ENCODE measurements at regions of chr19 and their contacts with region 1.

Region 1: GRCh38 chr19:17830567-17831418 is 9.5 kb upstream of the INSL3 start:
- DNase-seq: peak; percentile 38
- ATAC-seq: peak; percentile 46
- H3K4me3 ChIP-seq: no peak overlapping the region
- H3K4me3 Mint-ChIP-seq: no peak overlapping the region
- H3K27ac ChIP-seq: no peak overlapping the region
- H3K27ac Mint-ChIP-seq: no peak overlapping the region
- H3K4me1 ChIP-seq: no peaks in the 10 kb centered on the region
- H3K4me1 Mint-ChIP-seq: no peaks in the 10 kb centered on the region
- H3K27me3 ChIP-seq: no peaks in the 10 kb centered on the region
- H3K27me3 Mint-ChIP-seq: no peaks in the 10 kb centered on the region
- CTCF ChIP-seq: no peak

Region 2: GRCh38 chr19:17847538-17848366 is 17.0 kb after region 1 on chr19 and contains the start of gene JAK3:
- CTCF ChIA-PET with region 1: no interaction called
- POLR2A ChIA-PET with region 1: interaction called, 11 read pairs
- intact Hi-C with region 1: no loop called
- DNase-seq: peak; percentile 88
- ATAC-seq: peak; percentile 81
- H3K4me3 ChIP-seq: peak within 1 kb of the TSS; percentile 57 to 85 (median 67)
- H3K4me3 Mint-ChIP-seq: peak within 1 kb of the TSS; percentile 96
- H3K27ac ChIP-seq: peak within 1 kb of the TSS; percentile 87 to 94
- H3K27ac Mint-ChIP-seq: peak within 1 kb of the TSS; percentile 91
- H3K4me1 ChIP-seq: peaks cover 58 to 90% of the 10 kb centered on the region in 2 donors
- H3K4me1 Mint-ChIP-seq: peaks cover 61% of the 10 kb centered on the region
- H3K27me3 ChIP-seq: no peaks in the 10 kb centered on the region
- H3K27me3 Mint-ChIP-seq: no peaks in the 10 kb centered on the region
- CTCF ChIP-seq: no peak
- total RNA-seq, gene JAK3: 142 and 143 TPM in 2 replicates